ENCODE measurements at regions of chrX and their contacts with region 1.

Region 1: DNA sequence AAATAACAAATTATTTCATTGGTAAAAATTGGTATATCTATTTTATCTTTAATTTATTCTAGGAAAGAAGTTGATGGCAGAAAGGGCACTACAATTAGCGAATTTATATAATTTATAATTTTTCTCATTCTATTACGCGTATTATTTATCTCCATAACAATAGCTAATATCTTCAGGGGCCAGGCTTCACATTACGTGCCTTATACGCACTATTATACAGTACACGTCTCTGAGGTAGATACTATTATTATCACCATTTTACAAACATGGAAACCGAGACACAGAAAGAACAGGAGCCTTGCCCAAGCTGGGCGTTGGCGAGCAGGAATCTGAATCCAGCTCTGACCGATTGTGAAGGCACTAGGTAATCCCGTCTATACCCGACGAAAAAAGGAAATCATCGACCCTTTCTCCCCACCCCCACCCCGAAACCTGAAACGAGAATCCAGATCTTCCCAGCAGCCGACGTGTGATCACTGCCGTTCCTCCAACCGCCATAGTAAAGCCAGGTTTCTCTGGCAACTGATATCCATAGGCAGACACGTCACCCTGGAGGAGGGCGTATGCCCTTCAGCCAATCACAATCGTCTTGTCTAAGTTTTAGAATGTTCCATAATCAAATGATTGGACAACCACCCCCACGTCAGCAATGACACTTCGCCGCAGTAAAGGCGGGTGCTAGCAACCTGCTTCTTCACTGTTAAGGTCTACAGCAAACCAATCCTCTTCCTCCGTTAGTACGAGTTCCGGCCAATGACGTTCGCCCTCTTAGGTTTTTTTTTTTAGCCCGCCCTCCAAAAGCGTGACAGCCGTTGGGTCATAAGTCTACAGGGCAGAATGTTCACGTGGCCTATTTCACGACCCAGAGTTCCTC is at the start of gene MORF4L2:
- DNase-seq: peak; percentile 93 to 97
- H3K4me3 ChIP-seq: peak within 1 kb of the TSS; percentile 58 to 63
- H3K27ac ChIP-seq: peak within 1 kb of the TSS; percentile 89 to 91
- H3K4me1 ChIP-seq: no peaks in the 10 kb centered on the region
- H3K27me3 ChIP-seq: no peaks in the 10 kb centered on the region
- CTCF ChIP-seq: no peak
- total RNA-seq, gene MORF4L2: 211 TPM

Region 2: GRCh38 chrX:103356130-103356798 is 330.2 kb before region 1 on chrX and contains the start of gene TCEAL9:
- intact Hi-C with region 1: loop called (anchors 2 kb)
- DNase-seq: peak in 1 of 2 donors; percentile 79
- H3K4me3 ChIP-seq: peak within 1 kb of the TSS; percentile 68 to 72
- H3K27ac ChIP-seq: peak within 1 kb of the TSS; percentile 86 to 89
- H3K4me1 ChIP-seq: no peaks in the 10 kb centered on the region
- H3K27me3 ChIP-seq: no peaks in the 10 kb centered on the region
- CTCF ChIP-seq: no peak
- total RNA-seq, gene TCEAL9: 20.9 TPM

Region 3: DNA sequence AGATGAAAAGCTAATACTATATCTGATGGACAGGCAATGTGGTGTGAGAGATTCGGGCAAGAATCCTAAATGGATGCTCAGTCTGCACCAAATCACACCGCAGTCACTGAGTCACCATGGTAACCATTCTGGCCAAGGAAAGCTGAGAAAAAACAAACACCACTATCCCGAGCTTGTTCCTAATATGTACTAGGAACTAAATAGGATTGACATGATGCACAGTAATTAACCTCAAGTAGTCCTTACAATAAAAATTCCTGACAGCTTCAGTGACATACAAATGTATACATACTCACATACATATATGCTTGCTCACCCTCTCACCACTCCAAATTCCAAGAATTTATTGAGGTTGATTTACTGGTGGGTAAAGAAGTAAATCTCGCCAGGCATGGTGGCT is 166.1 kb before region 1 on chrX:
- intact Hi-C with region 1: no loop called
- DNase-seq: no peak
- H3K4me3 ChIP-seq: no peak overlapping the region
- H3K27ac ChIP-seq: no peak overlapping the region
- H3K4me1 ChIP-seq: no peaks in the 10 kb centered on the region
- H3K27me3 ChIP-seq: no peaks in the 10 kb centered on the region
- CTCF ChIP-seq: no peak

Region 4: DNA sequence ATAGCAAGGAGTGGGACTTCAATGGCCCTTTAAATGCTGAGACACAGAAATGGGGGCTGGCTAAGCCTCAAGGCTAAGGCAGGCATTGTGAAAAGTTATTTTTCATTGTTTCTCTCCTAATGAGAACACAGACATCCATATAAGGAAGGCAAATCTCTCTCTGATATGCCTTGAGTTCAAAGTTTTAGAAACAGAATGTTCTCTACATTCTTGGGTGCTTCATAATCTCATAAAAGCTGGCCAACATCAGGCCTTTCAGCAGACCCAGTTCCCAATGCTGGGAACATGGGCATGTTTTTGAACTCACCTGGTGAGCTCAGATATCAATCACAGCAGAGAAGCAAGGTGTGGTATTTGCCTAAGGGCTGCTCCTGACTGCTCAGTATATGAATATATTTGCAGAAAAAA is 147.7 kb before region 1 on chrX:
- intact Hi-C with region 1: loop called (anchors 2 kb)
- DNase-seq: no peak
- H3K4me3 ChIP-seq: no peak overlapping the region
- H3K27ac ChIP-seq: peak overlapping the region; percentile 72 to 80
- H3K4me1 ChIP-seq: peaks cover 0 to 14% of the 10 kb centered on the region in 2 donors
- H3K27me3 ChIP-seq: no peaks in the 10 kb centered on the region
- CTCF ChIP-seq: no peak

Region 5: DNA sequence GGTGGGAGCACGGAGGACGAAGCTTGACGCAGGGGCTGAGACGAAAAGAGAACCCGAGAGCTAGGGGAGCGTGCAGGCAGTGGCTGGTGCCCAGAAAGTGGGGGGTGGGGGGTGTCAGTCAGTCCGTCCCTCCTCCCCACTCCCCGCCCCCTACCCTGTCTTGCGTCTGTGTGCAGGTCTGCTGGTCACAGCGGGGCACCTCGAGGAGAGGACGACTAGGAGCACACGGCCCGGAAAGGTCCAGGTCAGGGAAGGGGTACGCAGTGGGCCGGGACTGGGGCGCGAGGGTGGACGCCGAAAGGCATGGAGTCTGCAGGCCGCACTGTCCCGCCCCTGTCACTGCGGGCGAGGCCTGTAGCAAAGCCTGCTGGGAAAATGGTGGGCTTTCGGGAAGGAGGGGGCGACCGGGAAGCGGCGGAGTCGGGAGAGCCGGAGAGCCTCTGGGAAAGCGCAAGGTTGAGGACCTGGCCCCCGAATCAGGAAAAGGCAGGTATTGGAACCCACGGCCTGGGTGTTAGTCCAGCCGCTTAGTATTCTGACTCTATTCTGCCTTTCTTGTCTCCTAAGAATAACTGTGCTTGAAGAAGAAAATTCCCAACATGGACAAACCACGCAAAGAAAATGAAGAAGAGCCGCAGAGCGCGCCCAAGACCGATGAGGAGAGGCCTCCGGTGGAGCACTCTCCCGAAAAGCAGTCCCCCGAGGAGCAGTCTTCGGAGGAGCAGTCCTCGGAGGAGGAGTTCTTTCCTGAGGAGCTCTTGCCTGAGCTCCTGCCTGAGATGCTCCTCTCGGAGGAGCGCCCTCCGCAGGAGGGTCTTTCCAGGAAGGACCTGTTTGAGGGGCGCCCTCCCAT is 56.9 kb before region 1 on chrX:
- intact Hi-C with region 1: loop called (anchors 2 kb)
- DNase-seq: peak in 1 of 2 donors; percentile 80
- H3K4me3 ChIP-seq: peak overlapping the region; percentile 47 to 68
- H3K27ac ChIP-seq: peak overlapping the region; percentile 82 to 90
- H3K4me1 ChIP-seq: no peaks in the 10 kb centered on the region
- H3K27me3 ChIP-seq: no peaks in the 10 kb centered on the region
- CTCF ChIP-seq: peak in 1 of 3 experiments; percentile 40

Region 6: DNA sequence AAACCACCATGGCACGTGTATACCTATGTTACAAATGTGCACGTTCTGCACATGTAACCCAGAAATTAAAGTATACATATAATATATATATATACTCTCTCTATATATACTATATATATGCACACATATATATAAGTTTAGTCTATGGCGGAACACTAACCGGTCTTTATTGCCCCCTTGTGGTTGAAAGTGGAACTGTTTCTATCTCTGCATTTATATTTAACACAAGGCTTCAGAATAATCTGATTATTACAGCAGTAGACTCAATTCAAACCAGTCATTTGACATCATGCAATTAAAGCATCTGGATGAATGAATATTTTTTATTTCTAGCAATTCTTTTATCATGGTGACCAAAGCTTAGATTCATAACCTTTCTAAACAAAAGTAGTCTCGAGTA is 131.1 kb after region 1 on chrX:
- intact Hi-C with region 1: loop called (anchors 2 kb)
- DNase-seq: no peak
- H3K4me3 ChIP-seq: no peak overlapping the region
- H3K27ac ChIP-seq: no peak overlapping the region
- H3K4me1 ChIP-seq: no peaks in the 10 kb centered on the region
- H3K27me3 ChIP-seq: no peaks in the 10 kb centered on the region
- CTCF ChIP-seq: peak; percentile 15 to 82 (median 73)

Region 7: DNA sequence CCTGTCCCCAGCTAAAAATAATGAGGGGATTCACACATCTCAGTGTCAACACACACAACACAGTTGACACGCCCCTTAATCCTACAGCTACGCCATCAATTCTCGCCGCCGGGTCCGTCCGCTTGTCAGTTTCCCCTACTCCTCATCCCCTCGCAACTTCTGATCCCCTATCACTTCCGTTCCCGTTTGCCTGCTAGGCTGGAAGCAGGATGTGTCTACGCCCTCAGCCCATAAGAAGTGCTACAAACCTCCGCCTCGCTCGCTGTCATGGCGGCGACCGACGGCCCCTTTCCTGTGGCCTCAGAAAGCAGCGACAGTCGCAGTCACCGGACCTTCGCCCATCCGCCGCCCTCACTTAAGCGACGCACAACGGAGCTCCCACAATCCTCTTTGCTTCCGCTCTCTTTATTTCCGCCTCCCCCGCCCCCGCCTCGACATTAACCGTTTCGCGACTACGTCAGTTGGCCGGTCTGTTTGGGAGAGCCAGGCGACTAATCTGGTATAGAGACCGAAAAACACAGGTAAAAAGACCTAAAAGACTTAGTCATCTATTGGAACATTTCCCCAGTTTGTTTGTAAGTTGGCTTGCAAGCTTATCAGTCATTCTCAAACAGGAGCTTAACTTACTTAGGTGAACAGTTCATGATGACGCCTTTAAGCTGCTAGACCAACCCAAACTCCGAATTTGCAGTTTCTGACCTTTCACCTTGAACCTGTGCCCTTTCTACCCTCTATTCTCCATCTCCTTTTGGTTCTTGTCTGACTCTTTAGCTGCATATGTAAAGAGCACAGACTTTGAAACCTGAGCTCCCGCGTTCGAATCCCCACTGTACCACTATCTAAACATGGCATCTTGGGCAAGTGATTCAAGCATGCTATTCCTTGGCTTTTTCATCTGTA is 470.4 kb after region 1 on chrX and contains the start of gene SLC25A53:
- intact Hi-C with region 1: loop called (anchors 10 kb)
- DNase-seq: peak; percentile 28 to 85
- H3K4me3 ChIP-seq: peak within 1 kb of the TSS; percentile 37 to 77
- H3K27ac ChIP-seq: peak within 1 kb of the TSS; percentile 90 to 93
- H3K4me1 ChIP-seq: no peaks in the 10 kb centered on the region
- H3K27me3 ChIP-seq: no peaks in the 10 kb centered on the region
- CTCF ChIP-seq: no peak
- total RNA-seq, gene SLC25A53: 3.1 TPM

Measured in ascending aorta (tissue), 2 donors.